Left cardiac atrium (tissue), 4 donors: ENCODE measurements at regions of chr15 and their contacts with region 1.

Region 1: GRCh38 chr15:63277038-63277892 is at the start of gene APH1B:
- DNase-seq: peak; percentile 89
- ATAC-seq: peak; percentile 96 to 97
- total RNA-seq, gene APH1B: 9.6 to 11.8 TPM

Region 2: DNA sequence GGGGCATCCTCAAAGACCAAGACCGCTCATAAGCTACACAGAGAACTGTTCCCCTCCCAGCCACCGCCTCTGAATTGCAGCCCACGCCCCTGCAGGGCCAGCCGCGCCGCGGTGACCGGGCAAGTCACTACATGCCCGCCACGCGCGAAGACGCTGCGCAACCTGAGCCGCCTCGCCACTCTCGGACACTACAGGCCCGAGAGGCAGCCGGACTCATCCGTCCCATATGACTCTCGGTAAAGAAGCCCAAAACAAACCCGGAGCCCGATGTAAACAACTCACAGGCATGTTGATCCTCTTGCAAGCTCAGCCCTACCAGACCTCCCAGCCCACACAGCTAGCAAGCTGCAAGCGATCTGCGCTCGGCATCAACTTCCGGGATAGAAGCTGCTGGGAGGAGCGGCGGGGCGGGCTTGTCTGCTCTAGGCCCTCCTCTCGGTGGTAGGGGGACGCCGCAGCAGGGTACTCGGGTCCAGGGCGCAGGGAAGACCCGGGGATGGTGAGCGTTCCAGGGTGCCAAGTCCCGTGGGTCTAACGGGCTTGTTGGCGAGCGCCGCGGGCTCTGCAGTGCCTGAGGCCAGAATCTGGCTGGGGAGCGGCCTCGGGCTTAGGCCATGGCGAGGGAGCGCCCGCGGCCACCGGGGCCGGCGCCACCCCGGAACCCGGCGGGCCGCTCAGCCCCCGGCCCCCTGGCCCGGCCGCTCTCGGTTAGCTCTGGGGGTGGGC is 120.0 kb before region 1 on chr15 and contains the start of gene RPS27L:
- intact Hi-C with region 1: loop called in 1 of 2 experiments (anchors 5 kb)
- DNase-seq: peak; percentile 94
- ATAC-seq: peak; percentile 97 to 99
- total RNA-seq, gene RPS27L: 137 to 159 TPM

Region 3: DNA sequence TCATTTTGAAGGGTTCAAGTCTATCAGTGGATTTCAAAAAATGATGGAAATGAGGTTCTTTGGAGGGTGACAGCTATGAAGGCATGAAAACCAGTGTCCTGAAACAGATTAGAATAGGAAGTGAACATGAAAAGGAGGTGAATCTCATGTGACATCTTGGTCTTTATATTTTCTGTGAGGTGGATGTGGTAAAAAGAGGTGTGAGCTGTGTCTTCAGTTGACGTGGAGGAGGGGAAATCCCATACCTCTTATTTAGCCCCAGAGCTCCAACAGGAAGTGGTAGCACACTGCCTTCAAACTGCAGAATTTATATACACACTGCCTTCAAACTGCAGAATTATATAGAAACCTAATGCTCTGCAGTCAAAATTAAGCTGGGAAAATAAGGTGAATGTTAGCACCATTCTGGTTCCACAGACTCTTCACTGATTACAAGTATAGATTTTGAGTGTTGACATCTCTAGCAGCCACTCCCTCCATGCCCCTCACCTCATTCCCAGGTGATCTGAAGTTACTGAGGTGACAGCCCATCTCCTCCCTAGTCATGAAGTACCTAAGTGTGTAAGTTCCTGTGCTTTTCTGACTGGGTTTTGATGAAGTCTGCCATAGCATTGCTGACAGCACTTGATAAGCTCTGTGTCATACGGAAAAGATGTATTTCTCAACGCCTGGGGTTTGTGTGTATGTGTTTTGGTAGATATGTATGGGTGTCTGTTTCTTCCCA is 85.2 kb before region 1 on chr15:
- intact Hi-C with region 1: loop called in 1 of 2 experiments (anchors 10 kb)
- DNase-seq: no peak
- ATAC-seq: no peak